ENCODE measurements at regions of chr14 and their contacts with region 1.

Region 1: DNA sequence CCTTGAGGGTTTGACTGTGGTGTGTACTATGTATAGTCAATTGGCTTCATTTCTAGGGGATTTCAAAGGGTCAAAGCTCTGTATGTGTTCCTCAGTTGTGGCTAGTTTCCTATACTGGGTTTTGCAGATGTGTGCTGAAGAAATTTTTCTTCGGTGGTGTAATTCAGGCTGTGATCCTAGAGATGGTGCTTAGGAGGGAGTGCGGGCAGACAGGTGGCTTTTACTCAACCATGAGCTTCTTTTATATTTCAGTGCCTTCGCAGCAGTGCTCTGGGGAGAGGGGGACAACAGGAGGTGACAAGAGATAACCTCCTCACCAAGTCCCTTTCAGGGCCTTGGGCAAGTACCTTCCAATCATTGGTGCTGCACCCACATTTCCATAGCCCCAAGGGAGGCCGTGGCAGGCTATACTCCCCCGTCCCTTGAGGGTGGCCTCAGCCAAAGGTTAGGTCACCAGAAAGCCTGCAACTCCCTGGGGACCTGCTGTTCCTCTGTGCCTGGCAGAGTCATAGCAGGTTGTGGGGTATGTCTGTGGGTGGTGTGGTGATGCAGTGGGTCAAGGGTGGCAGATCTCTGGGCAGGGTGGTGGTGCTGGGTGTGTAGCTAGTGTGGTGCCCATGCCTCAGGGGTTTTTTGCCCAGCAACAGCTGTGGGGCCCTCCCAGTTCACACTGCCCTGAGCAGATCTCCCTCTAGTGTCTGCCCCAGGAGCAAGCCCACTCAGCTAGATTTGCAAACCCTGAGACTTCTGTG is 37.0 kb upstream of the TMX1 start:
- DNase-seq: no peak
- H3K4me3 Mint-ChIP-seq: no peak overlapping the region
- H3K27ac Mint-ChIP-seq: no peak overlapping the region
- H3K4me1 Mint-ChIP-seq: no peaks in the 10 kb centered on the region
- H3K27me3 Mint-ChIP-seq: peaks cover 17% of the 10 kb centered on the region

Region 2: GRCh38 chr14:51157012-51157411 is 46.1 kb before region 1 on chr14:
- intact Hi-C with region 1: loop called (anchors 10 kb)
- DNase-seq: no peak
- H3K4me3 Mint-ChIP-seq: no peak overlapping the region
- H3K27ac Mint-ChIP-seq: no peak overlapping the region
- H3K4me1 Mint-ChIP-seq: no peaks in the 10 kb centered on the region
- H3K27me3 Mint-ChIP-seq: peaks cover 4% of the 10 kb centered on the region

Measured in activated T-helper 2 cell treated with anti-CD3 and anti-CD28 coated beads, Interferon-gamma antibody, Interleukin-2, Interleukin-4, amounts not matched to agents 10 μg/mL and 5 μg/mL and 100 μg/mL, durations not matched to agents 14 hours and 24 hours and 36 hours (primary cell).